Activated T-helper 1 cell treated with anti-CD3 and anti-CD28 coated beads, Interleukin-12 subunit alpha, Interleukin-12 subunit beta, Interleukin-2, Interleukin-4 antibody, amounts not matched to agents 30 ng/mL and 10 ng/mL and 1 ng/mL, durations not matched to agents 14 hours and 24 hours and 36 hours (primary cell): ENCODE measurements at regions of chr5 and their contacts with region 1.

Region 1: GRCh38 chr5:67095346-67096171 is 101.0 kb downstream of the CD180 start:
- DNase-seq: no peak
- H3K4me3 Mint-ChIP-seq: no peak overlapping the region
- H3K27ac Mint-ChIP-seq: no peak overlapping the region
- H3K4me1 Mint-ChIP-seq: peaks cover 22% of the 10 kb centered on the region
- H3K27me3 Mint-ChIP-seq: no peaks in the 10 kb centered on the region

Region 2: GRCh38 chr5:66987949-66988838 is 107.4 kb before region 1 on chr5:
- intact Hi-C with region 1: loop called (anchors 5 kb)
- DNase-seq: no peak
- H3K4me3 Mint-ChIP-seq: no peak overlapping the region
- H3K27ac Mint-ChIP-seq: no peak overlapping the region
- H3K4me1 Mint-ChIP-seq: peaks cover 31% of the 10 kb centered on the region
- H3K27me3 Mint-ChIP-seq: no peaks in the 10 kb centered on the region